ENCODE measurements at regions of chr2 and their contacts with region 1.

Region 1: GRCh38 chr2:60550178-60550983 is 3.1 kb downstream of the BCL11A start:
- DNase-seq: peak; percentile 83
- ATAC-seq: peak; percentile 84

Region 2: DNA sequence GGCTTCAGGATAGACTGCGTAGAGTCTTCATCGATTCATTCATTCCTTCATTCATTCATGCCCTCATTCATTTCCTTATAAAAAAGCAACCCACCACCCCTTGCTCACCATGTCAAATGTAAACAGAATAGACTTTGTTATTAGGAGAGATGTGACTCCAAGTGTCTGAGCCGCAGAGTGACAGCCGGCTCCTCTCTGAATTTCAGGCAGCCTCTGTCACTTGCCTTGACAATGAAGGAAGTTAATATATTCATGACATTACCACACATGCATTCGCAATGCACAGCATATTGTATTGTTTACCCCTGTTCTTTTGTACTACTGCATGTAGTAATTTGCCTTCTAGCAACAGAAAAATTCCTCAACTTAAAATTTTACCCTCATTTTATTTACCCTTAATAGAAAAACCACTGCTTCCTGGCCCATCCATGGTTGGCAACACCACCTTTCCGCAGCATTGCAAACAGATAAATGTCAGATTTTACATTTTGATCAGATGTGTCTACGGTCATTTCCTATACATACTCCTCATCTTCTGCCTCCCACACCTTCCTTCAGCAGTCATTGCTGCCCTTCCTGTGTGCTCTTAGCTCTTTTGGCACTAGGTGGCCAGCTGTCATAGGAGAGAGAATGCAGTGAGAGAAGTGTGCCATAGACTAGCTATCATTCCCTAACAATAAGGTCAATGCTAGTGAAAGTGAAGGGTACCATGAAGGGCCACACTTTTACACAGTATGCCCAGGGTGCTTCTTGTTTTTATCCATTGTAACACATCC is 1087.8 kb before region 1 on chr2:
- intact Hi-C with region 1: loop called (anchors 10 kb)
- DNase-seq: no peak
- ATAC-seq: no peak

Region 3: DNA sequence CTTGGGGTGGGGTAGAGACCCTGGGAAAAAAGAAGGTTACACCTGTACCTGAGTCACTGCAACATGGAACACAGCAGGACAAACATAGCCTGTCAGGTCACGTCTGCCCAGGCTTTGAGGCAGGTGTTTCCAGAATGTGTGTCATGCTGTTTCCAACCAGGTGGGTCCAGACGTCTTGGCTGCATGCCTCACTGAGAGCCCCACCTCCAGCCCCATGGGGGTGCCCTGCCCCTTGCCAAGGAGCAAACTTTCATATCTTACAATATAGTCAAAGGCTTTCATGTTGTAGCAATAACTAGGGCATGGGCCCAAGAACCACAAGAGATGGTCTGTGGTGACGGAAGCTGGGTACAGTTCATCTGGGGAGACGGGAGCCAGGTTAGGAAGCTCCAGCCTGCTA is 496.6 kb before region 1 on chr2:
- intact Hi-C with region 1: loop called (anchors 5 kb)
- DNase-seq: no peak
- ATAC-seq: no peak

Region 4: GRCh38 chr2:60317844-60318243 is 232.5 kb before region 1 on chr2:
- intact Hi-C with region 1: loop called (anchors 5 kb)
- DNase-seq: no peak
- ATAC-seq: no peak

Region 5: GRCh38 chr2:60468382-60469085 is 81.8 kb before region 1 on chr2:
- intact Hi-C with region 1: no loop called
- DNase-seq: no peak
- ATAC-seq: no peak

Region 6: GRCh38 chr2:60504049-60504448 is 46.3 kb before region 1 on chr2:
- intact Hi-C with region 1: loop called (anchors 1 kb)
- DNase-seq: no peak
- ATAC-seq: no peak